ENCODE measurements at regions of chr15 and their contacts with region 1.

Region 1: GRCh38 chr15:99473981-99474906 is 91.5 kb upstream of the MEF2A start:
- DNase-seq: peak; percentile 58 to 86
- ATAC-seq: peak; percentile 86 to 93 (median 89)
- H3K4me3 ChIP-seq: peak overlapping the region; percentile 44
- H3K27ac ChIP-seq: peak overlapping the region; percentile 83
- H3K4me1 ChIP-seq: peaks cover 37% of the 10 kb centered on the region
- H3K27me3 ChIP-seq: no peaks in the 10 kb centered on the region
- CTCF ChIP-seq: no peak

Region 2: GRCh38 chr15:99371180-99372103 is 102.8 kb before region 1 on chr15:
- intact Hi-C with region 1: no loop called
- DNase-seq: no peak
- ATAC-seq: no peak
- H3K4me3 ChIP-seq: no peak overlapping the region
- H3K27ac ChIP-seq: no peak overlapping the region
- H3K4me1 ChIP-seq: no peaks in the 10 kb centered on the region
- H3K27me3 ChIP-seq: no peaks in the 10 kb centered on the region
- CTCF ChIP-seq: no peak

Region 3: DNA sequence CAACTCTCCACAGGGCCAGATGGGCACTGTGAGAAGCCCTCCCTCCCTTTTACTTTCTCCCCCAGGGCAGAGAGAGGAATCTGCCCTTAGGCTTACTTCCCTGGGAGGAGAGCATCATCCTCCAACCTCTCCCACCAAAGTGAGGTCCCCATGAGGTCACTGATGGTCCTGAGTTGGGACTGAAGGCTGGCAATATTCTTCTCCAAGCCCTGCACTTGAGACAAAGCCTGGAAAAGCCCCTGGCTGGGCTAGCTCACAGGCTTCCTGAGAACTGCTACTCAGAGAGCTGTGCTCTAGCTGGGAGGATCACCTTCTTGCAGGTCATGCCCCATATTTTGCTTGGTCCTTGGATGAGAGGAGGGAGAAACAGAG is 18.5 kb before region 1 on chr15:
- intact Hi-C with region 1: loop called in 1 of 2 experiments (anchors 2 kb)
- DNase-seq: no peak
- ATAC-seq: no peak
- H3K4me3 ChIP-seq: no peak overlapping the region
- H3K27ac ChIP-seq: peak overlapping the region; percentile 85
- H3K4me1 ChIP-seq: peaks cover 32% of the 10 kb centered on the region
- H3K27me3 ChIP-seq: no peaks in the 10 kb centered on the region
- CTCF ChIP-seq: no peak

Region 4: DNA sequence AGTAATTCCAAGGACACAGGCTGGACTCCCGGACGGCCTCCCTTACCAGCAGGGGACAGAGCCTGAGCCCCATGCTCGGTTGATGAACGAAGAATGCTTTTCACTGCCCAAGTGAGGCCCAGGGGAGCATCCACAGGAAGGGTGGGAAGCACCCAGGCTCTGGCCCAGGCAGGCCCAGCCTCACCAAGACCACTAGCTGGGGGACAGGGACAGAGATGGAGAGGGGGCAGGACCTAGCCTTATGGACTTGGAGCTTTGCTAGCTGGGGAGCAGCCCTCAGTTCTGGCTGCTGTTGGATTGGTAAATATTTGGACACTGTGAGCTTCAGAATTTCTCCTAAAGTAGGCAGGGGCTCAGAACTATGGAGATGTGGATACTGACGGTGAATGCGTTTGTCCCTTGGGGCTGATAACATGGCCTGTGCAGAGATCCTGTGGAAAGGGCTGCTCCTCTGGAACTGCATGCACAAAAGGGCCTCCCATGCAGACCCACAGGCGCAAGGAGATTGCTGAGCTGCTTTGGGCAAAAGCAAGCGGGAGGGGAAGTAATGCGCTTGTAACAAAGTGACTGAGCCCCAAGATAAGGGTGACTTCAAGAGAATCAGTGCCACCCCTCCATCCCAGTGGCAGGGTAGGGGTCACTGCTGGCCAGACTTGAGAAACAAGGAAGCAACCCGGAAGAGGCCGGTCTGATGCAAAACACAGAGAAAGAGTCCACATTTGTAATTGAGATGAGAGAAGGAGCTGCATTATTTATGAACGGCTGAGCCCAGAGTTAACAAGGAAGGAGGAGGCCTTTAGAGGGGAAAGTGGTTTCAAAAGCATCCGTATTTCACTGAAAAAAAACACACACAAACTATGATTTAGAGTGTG is 21.4 kb after region 1 on chr15:
- intact Hi-C with region 1: no loop called
- DNase-seq: no peak
- ATAC-seq: no peak
- H3K4me3 ChIP-seq: no peak overlapping the region
- H3K27ac ChIP-seq: no peak overlapping the region
- H3K4me1 ChIP-seq: no peaks in the 10 kb centered on the region
- H3K27me3 ChIP-seq: no peaks in the 10 kb centered on the region
- CTCF ChIP-seq: no peak

Region 5: GRCh38 chr15:99507504-99508310 is 33.5 kb after region 1 on chr15:
- intact Hi-C with region 1: loop called in 1 of 2 experiments (anchors 5 kb)
- DNase-seq: peak; percentile 82 to 92
- ATAC-seq: peak; percentile 84 to 89 (median 85)
- H3K4me3 ChIP-seq: peak overlapping the region; percentile 41
- H3K27ac ChIP-seq: peak overlapping the region; percentile 94
- H3K4me1 ChIP-seq: peaks cover 71% of the 10 kb centered on the region
- H3K27me3 ChIP-seq: no peaks in the 10 kb centered on the region
- CTCF ChIP-seq: no peak

Region 6: GRCh38 chr15:99536422-99537040 is 62.3 kb after region 1 on chr15:
- intact Hi-C with region 1: no loop called
- DNase-seq: peak in 1 of 2 donors; percentile 67
- ATAC-seq: peak; percentile 59 to 95 (median 89)
- H3K4me3 ChIP-seq: no peak overlapping the region
- H3K27ac ChIP-seq: peak overlapping the region; percentile 66
- H3K4me1 ChIP-seq: peaks cover 9% of the 10 kb centered on the region
- H3K27me3 ChIP-seq: no peaks in the 10 kb centered on the region
- CTCF ChIP-seq: no peak

Measured in psoas muscle (tissue), 8 donors.